Panc1 (cell line): ENCODE measurements at regions of chr4 and their contacts with region 1.

Region 1: DNA sequence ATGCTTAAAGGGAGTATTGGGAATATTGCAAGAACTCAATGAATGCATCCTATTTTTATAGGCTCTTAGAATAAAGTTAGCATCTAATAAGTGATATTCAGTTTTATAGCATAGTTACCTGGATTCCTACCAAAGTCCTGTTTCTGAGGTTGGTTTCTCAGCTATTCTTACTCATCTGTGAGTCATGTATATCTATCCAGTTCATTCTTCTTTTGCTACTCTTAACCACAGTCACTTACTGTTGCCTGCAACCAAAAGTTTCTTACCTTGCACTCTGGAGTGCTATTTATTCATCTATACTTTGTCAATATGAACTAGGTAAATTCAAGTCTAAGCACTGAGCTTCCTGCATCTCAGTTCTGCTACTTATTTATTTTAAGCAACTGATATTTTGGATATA is 322.5 kb downstream of the HS3ST1 start:
- DNase-seq: no peak
- ATAC-seq: no peak
- H3K4me3 ChIP-seq: no peak overlapping the region
- H3K27ac ChIP-seq: no peak overlapping the region
- H3K4me1 ChIP-seq: no peaks in the 10 kb centered on the region
- H3K27me3 ChIP-seq: no peaks in the 10 kb centered on the region
- CTCF ChIP-seq: no peak

Region 2: GRCh38 chr4:11326021-11326420 is 219.8 kb after region 1 on chr4:
- CTCF ChIA-PET with region 1: no interaction called
- POLR2A ChIA-PET with region 1: no interaction called
- in situ Hi-C with region 1: no loop called
- intact Hi-C with region 1: no loop called
- DNase-seq: no peak
- ATAC-seq: no peak
- H3K4me3 ChIP-seq: no peak overlapping the region
- H3K27ac ChIP-seq: no peak overlapping the region
- H3K4me1 ChIP-seq: no peaks in the 10 kb centered on the region
- H3K27me3 ChIP-seq: no peaks in the 10 kb centered on the region
- CTCF ChIP-seq: no peak

Region 3: DNA sequence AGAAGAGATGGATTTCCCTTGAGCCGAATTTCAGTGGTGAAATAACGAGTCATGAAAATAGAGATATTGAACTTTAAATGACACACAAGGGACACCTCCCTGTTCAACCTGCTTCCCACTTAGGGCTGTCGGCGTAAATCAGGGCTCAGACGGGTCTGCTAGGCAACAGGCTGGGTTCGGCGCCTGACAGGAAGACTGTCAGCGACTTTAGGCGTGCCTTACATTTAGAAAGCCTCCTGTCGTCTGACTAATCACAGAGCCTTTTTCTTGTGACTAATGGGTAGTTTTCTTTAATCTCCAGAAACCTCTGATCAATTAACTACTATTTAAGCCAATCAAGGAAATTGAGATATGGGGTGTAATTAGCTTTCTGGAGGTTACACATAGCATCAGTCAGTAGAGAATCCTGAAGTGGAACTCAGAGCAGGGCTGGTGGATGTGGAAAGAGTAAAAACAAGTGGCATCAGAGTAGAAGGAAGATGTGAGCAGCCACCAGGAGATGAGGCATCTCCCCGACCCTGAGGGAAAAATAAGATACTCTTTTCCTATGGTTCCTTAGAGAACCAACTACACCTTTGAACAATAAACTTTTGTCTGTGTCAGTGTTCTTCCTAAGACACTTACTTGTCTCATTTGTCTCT is 408.7 kb after region 1 on chr4:
- CTCF ChIA-PET with region 1: no interaction called
- POLR2A ChIA-PET with region 1: interaction called, 10 read pairs
- in situ Hi-C with region 1: no loop called
- intact Hi-C with region 1: no loop called
- DNase-seq: no peak
- ATAC-seq: no peak
- H3K4me3 ChIP-seq: no peak overlapping the region
- H3K27ac ChIP-seq: no peak overlapping the region
- H3K4me1 ChIP-seq: no peaks in the 10 kb centered on the region
- H3K27me3 ChIP-seq: no peaks in the 10 kb centered on the region
- CTCF ChIP-seq: no peak